ENCODE measurements at regions of chr17 and their contacts with region 1.

Region 1: DNA sequence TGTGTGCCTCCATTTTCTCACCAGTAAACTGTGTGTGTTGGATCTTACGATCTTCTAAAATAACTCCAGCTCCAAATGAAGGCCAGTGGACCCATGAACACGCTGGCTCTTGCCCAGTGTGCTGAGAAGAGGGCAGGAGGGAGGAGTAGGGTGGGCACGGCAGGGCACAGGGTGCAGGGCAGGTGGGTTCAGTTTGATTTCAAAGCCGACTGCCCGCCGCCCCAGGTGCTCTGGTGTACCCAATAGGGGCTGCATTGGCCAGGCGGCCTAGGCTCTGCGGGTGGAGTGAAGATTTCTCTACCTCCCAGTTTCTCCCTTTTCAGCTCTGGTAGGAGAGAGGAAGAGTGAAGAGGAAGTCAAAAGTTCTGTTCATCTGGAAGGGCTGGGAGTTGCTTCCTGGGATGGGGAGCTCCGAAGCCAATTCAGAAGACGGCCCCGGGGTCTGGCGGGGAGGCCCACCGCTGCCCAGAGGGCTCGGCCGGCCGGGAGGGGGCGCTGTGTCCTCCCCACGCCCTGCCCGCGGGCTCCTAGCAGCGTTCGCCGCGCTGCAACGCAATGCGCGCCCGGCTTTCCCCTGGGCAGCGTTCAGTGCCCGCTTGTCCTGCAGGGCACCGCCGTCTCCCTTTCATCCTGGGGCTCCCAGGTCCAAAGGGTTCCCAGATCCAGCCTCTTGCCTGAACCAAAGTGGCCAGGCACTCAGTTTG is 1.1 kb upstream of the CRHR1 start:
- DNase-seq: peak; percentile 75
- ATAC-seq: peak; percentile 71
- H3K4me3 Mint-ChIP-seq: peak overlapping the region; percentile 58
- H3K27ac Mint-ChIP-seq: no peak overlapping the region
- H3K4me1 Mint-ChIP-seq: peaks cover 2% of the 10 kb centered on the region
- H3K27me3 Mint-ChIP-seq: peaks cover 56% of the 10 kb centered on the region

Region 2: GRCh38 chr17:45770632-45771270 is 12.3 kb before region 1 on chr17:
- CTCF ChIA-PET with region 1: interaction called, 10 read pairs
- POLR2A ChIA-PET with region 1: no interaction called
- intact Hi-C with region 1: no loop called
- DNase-seq: no peak
- ATAC-seq: no peak
- H3K4me3 Mint-ChIP-seq: no peak overlapping the region
- H3K27ac Mint-ChIP-seq: no peak overlapping the region
- H3K4me1 Mint-ChIP-seq: no peaks in the 10 kb centered on the region
- H3K27me3 Mint-ChIP-seq: peaks cover 25% of the 10 kb centered on the region

Region 3: DNA sequence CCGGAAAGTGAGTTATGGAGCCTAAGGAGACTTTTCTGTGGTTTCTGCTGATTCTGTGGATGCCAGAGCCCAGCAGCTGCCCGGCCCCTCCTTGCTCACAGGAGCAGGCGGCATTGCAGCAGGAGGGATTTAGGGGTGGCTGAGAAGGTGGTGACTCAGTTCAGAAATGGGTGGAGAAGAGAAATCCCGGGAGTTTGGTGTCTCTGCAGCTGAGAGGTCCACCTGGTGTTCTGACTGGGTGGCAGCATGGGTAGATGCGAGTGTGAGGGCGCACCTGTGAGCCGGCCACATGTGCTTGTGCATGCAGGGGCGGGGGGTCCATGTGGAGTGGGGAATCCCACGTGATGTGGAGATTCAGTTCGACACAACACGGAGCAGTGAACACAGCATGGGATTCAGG is 45.6 kb after region 1 on chr17:
- CTCF ChIA-PET with region 1: interaction called, 9 read pairs
- POLR2A ChIA-PET with region 1: interaction called, 4 read pairs
- intact Hi-C with region 1: loop called (anchors 1 to 5 kb)
- DNase-seq: no peak
- ATAC-seq: no peak
- H3K4me3 Mint-ChIP-seq: no peak overlapping the region
- H3K27ac Mint-ChIP-seq: no peak overlapping the region
- H3K4me1 Mint-ChIP-seq: no peaks in the 10 kb centered on the region
- H3K27me3 Mint-ChIP-seq: no peaks in the 10 kb centered on the region

Region 4: GRCh38 chr17:45834471-45835396 is 51.7 kb after region 1 on chr17:
- CTCF ChIA-PET with region 1: interaction called, 9 read pairs
- POLR2A ChIA-PET with region 1: no interaction called
- intact Hi-C with region 1: loop called (anchors 1 to 5 kb)
- DNase-seq: no peak
- ATAC-seq: no peak
- H3K4me3 Mint-ChIP-seq: no peak overlapping the region
- H3K27ac Mint-ChIP-seq: no peak overlapping the region
- H3K4me1 Mint-ChIP-seq: no peaks in the 10 kb centered on the region
- H3K27me3 Mint-ChIP-seq: no peaks in the 10 kb centered on the region

Region 5: DNA sequence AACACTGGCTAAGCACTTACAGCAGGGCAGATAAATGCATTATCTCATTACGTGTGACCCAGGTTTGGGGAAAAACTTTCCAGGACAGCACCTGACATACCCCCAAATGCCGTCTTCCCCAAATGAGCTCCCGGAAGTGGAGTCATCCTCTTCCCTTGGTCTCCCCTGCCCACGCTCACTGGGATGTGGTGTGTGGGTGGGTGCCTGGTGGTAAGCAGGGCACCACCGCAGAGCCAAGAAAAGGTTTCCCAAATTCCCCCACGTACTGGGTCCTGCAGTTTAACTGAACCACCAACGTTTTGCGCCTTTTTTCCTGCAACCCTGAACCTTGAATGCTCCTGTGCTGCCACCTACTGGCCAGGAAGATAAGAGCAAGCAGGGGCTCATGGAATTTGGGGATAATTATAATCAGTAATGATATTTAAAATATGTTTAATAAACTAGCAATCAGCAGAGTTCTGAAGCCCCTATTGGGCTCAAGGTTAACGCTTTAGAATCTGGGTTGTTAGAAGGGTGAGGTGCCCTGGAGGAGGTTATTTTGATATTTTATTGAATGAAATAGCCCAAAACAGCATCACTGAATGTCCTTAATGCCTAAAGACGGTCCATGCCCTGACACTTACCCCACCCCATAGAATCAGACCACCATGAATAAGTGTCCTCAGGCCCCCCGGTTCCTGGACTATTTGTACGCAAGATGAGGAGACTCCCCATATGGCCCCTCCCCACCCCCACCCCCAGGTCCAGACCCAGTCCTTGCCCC is 69.7 kb after region 1 on chr17:
- CTCF ChIA-PET with region 1: interaction called, 9 read pairs
- POLR2A ChIA-PET with region 1: no interaction called
- intact Hi-C with region 1: loop called in 1 of 2 experiments (anchors 2 kb)
- DNase-seq: peak; percentile 78
- ATAC-seq: peak; percentile 44
- H3K4me3 Mint-ChIP-seq: no peak overlapping the region
- H3K27ac Mint-ChIP-seq: no peak overlapping the region
- H3K4me1 Mint-ChIP-seq: peaks cover 4% of the 10 kb centered on the region
- H3K27me3 Mint-ChIP-seq: peaks cover 12% of the 10 kb centered on the region

Region 6: GRCh38 chr17:45894022-45894784 is 111.2 kb after region 1 on chr17 and contains the start of gene MAPT:
- CTCF ChIA-PET with region 1: interaction called, 3 read pairs
- POLR2A ChIA-PET with region 1: no interaction called
- intact Hi-C with region 1: loop called in 1 of 2 experiments (anchors 1 kb)
- DNase-seq: peak; percentile 90
- ATAC-seq: peak; percentile 91
- H3K4me3 Mint-ChIP-seq: peak within 1 kb of the TSS; percentile 75
- H3K27ac Mint-ChIP-seq: no peak within 1 kb of the TSS
- H3K4me1 Mint-ChIP-seq: peaks cover 19% of the 10 kb centered on the region
- H3K27me3 Mint-ChIP-seq: peaks cover 36% of the 10 kb centered on the region
- total RNA-seq, gene MAPT: 0.75 to 1.7 TPM